Lower leg skin (tissue), 4 donors: ENCODE measurements at regions of chr9 and their contacts with region 1.

Region 1: GRCh38 chr9:19513671-19514275 is 105.0 kb downstream of the ACER2 start:
- DNase-seq: no peak
- H3K4me3 ChIP-seq: no peak overlapping the region
- CTCF ChIP-seq: no peak
- POLR2A ChIP-seq: no peak

Region 2: GRCh38 chr9:19677924-19678323 is 164.2 kb after region 1 on chr9:
- intact Hi-C with region 1: loop called (anchors 5 kb)
- DNase-seq: no peak
- H3K4me3 ChIP-seq: no peak overlapping the region
- CTCF ChIP-seq: no peak
- POLR2A ChIP-seq: no peak

Region 3: GRCh38 chr9:19754921-19755320 is 241.1 kb after region 1 on chr9:
- intact Hi-C with region 1: loop called (anchors 5 kb)
- DNase-seq: no peak
- H3K4me3 ChIP-seq: no peak overlapping the region
- CTCF ChIP-seq: no peak
- POLR2A ChIP-seq: no peak